Gastrocnemius medialis (tissue), 4 donors: ENCODE measurements at regions of chr2 and their contacts with region 1.

Region 1: DNA sequence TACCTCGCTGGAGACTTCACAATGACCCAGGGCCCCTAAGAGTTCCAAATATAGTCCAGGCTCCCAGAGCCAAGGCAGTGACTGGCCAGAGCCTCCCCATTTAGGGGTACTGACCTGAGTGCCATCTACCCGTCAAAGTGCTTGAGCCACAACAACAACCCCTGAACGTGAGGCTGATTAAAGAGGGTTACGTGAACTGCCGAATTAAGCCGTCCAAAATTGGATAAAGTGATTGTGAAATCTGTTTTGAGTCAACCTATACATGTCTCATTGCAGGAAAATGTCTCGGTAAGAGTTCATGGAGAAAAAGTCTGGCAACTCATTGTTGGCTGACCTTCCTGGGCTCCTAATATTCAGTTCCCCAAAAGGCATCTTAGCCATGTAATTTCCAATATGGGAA is 116.3 kb downstream of the TTC32 start:
- DNase-seq: no peak
- ATAC-seq: peak; percentile 52 to 77
- H3K4me3 ChIP-seq: peak overlapping the region in 1 of 4 donors; percentile 46
- H3K27ac ChIP-seq: peak overlapping the region; percentile 61 to 82 (median 67)
- H3K4me1 ChIP-seq: peaks cover 14 to 21% of the 10 kb centered on the region in 2 donors
- H3K27me3 ChIP-seq: no peaks in the 10 kb centered on the region
- CTCF ChIP-seq: no peak
- POLR2A ChIP-seq: peak; percentile 42 to 72

Region 2: GRCh38 chr2:19801367-19802080 is 16.1 kb after region 1 on chr2:
- in situ Hi-C with region 1: no loop called
- intact Hi-C with region 1: loop called (anchors 1 kb)
- DNase-seq: peak; percentile 94 to 98
- ATAC-seq: peak; percentile 83 to 93
- H3K4me3 ChIP-seq: no peak overlapping the region
- H3K27ac ChIP-seq: peak overlapping the region; percentile 75 to 89 (median 82)
- H3K4me1 ChIP-seq: peaks cover 15 to 25% of the 10 kb centered on the region in 2 donors
- H3K27me3 ChIP-seq: no peaks in the 10 kb centered on the region
- CTCF ChIP-seq: no peak
- POLR2A ChIP-seq: no peak